Pancreas (tissue), 10 donors: ENCODE measurements at regions of chr4 and their contacts with region 1.

Region 1: DNA sequence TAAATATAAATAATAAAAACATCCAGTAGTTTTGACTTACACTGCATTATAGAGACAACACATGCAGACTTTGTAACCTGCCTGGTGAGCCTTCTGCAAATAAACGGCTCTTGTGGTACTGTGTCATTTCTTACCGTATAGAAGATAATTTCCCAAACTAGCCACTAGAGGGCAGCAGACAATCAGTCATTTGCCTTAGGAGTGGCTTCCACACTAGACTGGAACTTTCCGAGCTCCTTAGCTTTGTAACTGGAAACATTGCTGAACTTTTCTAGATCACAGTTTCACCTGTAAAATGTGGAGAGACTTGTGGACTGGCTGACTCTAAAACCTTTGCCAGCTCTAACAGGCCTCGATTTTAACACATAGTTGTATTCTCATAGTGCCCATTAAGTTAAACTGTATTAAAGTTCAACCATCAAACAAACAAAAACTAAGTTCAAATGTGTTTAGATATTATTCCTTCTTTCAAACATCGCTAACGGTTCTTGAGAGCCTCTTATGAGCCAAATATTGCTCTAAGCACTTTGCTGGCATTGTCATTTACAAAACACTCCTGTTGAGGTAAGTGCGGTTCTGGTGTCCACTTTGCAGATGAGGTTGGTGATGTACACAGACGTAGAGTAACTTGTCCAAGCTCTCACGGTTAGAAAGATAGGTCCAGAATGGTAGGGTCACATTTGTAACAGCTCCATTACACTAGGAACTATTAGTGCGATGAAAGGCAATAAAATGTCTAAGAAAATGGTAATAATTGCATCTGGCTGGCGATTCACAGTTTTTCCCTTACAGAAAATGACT is 345.5 kb downstream of the ANK2 start:
- DNase-seq: peak in 3 of 6 donors; percentile 41 to 67 (median 63)
- ATAC-seq: peak; percentile 98 to 100 (median 99)
- H3K4me3 ChIP-seq: no peak overlapping the region
- H3K27ac ChIP-seq: no peak overlapping the region
- H3K4me1 ChIP-seq: no peaks in the 10 kb centered on the region
- H3K27me3 ChIP-seq: no peaks in the 10 kb centered on the region
- CTCF ChIP-seq: peak; percentile 76 to 90 (median 80)

Region 2: DNA sequence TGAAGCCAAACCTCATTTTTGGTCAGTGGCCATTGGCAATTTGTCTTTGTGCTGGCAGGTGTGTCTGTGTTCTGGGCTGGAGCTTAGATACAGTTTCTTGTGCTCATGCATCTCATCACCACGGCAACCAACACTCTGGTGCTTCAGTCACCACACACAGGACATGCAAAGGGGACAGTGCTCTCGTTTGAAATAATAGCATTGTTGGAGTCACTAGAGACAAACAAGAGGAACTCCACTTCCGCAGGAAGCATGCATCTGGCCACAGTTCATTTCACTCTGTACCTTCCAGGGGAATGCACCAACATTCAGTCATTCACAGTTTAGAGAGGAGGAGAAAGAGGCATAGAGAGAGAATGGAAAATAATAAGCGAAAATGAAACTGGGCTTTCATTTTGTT is 78.1 kb before region 1 on chr4:
- intact Hi-C with region 1: no loop called
- DNase-seq: no peak
- ATAC-seq: peak in 1 of 4 donors; percentile 25
- H3K4me3 ChIP-seq: no peak overlapping the region
- H3K27ac ChIP-seq: no peak overlapping the region
- H3K4me1 ChIP-seq: no peaks in the 10 kb centered on the region
- H3K27me3 ChIP-seq: no peaks in the 10 kb centered on the region
- CTCF ChIP-seq: no peak

Region 3: DNA sequence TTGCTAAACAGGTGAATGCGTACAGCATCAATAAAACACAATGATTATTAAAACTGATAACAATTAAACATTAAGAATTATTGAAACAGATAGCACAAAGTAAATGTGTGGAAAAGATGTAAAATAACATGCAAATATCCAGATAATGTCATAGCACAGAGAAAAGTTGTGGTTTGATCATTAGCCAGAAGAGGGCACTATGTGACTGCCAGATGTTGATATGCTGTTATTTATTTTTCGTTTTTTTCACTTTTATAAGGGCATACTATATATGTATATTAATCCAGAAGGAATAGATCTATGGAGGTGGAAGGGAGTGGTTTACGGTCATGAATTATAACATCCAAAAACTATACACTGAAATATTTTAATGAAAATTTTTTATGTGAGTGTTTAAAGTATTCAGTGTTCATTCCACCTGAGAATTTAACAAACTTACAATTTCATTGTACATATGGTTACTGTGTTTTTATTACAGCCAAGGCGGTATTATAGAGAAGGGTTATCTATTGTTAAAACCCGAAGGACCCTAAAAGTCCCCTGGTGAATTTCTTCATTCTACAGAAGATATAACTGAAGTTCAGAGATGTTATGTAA is 991.8 kb after region 1 on chr4:
- intact Hi-C with region 1: loop called in 2 of 3 experiments (anchors 10 kb)
- DNase-seq: peak in 1 of 6 donors; percentile 15
- ATAC-seq: peak; percentile 46 to 73 (median 66)
- H3K4me3 ChIP-seq: no peak overlapping the region
- H3K27ac ChIP-seq: no peak overlapping the region
- H3K4me1 ChIP-seq: no peaks in the 10 kb centered on the region
- H3K27me3 ChIP-seq: no peaks in the 10 kb centered on the region
- CTCF ChIP-seq: peak in 3 of 4 donors; percentile 50 to 55 (median 53)